PC-9 (cell line): ENCODE measurements at regions of chr2 and their contacts with region 1.

Region 1: DNA sequence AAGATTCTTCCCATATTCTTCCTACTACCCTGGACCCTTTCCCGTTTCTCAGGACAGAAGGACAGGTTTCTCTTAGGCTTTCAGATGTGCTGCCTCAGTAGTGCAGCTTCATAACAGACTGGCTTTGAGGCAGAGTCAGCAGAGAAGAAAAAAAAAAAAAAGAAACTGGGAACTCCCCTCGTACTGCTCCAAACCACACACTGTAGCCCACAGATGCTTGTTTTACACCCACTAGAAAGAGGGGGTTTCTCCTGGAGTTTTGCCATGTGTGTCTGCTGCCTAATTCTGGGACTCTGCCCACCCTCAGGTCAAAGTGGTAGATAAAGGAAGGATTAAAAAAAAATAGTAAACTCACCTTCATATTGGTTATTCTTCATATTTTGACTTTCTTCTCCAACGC is 95.9 kb downstream of the NCOA1 start:
- DNase-seq: no peak
- H3K4me3 ChIP-seq: no peak overlapping the region
- H3K27ac ChIP-seq: no peak overlapping the region
- H3K4me1 ChIP-seq: no peaks in the 10 kb centered on the region
- H3K27me3 ChIP-seq: no peaks in the 10 kb centered on the region
- CTCF ChIP-seq: no peak

Region 2: DNA sequence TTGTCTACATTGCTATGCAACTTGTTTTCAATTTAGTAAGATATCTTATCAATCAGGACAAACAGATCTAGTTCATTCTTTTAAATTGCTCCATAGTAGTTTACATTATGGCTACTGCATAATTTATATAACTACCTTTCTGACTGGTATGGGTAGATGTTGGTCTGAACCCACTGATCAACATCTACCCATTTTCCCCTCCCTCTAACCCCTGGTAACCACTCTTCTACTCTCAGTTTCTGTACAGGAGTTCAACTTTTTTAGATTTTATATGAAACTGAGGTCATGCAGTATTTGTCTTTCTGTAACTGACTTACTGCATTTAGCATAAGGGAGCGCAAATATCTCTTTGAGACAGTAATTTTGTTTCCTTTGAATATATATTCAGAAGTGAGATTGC is 299.8 kb before region 1 on chr2:
- CTCF ChIA-PET with region 1: no interaction called
- POLR2A ChIA-PET with region 1: no interaction called
- intact Hi-C with region 1: no loop called
- DNase-seq: no peak
- H3K4me3 ChIP-seq: no peak overlapping the region
- H3K27ac ChIP-seq: no peak overlapping the region
- H3K4me1 ChIP-seq: no peaks in the 10 kb centered on the region
- H3K27me3 ChIP-seq: no peaks in the 10 kb centered on the region
- CTCF ChIP-seq: no peak

Region 3: DNA sequence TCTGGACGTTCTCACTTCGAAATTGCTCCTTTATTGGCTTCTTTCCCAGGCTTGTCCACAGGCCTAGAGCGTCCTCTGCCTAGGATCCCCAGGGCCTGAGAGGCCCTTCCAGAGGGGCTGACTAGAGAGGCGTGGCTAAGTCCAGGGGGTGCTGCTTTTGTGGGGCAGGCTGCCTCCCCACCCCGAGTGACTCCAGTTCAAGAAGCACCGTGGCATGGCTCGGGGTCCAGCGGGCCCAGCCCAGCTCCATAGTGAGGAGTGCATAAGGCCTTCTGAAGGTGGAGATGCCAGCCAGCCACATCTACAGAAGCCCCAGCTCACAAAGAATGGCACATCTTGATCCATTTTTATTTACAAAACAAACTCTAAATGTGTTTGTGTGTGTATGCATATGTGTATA is 626.3 kb after region 1 on chr2:
- CTCF ChIA-PET with region 1: no interaction called
- POLR2A ChIA-PET with region 1: interaction called, 10 read pairs
- intact Hi-C with region 1: no loop called
- DNase-seq: no peak
- H3K4me3 ChIP-seq: no peak overlapping the region
- H3K27ac ChIP-seq: no peak overlapping the region
- H3K4me1 ChIP-seq: no peaks in the 10 kb centered on the region
- H3K27me3 ChIP-seq: no peaks in the 10 kb centered on the region
- CTCF ChIP-seq: no peak